ENCODE measurements at regions of chr11 and their contacts with region 1.

Region 1: DNA sequence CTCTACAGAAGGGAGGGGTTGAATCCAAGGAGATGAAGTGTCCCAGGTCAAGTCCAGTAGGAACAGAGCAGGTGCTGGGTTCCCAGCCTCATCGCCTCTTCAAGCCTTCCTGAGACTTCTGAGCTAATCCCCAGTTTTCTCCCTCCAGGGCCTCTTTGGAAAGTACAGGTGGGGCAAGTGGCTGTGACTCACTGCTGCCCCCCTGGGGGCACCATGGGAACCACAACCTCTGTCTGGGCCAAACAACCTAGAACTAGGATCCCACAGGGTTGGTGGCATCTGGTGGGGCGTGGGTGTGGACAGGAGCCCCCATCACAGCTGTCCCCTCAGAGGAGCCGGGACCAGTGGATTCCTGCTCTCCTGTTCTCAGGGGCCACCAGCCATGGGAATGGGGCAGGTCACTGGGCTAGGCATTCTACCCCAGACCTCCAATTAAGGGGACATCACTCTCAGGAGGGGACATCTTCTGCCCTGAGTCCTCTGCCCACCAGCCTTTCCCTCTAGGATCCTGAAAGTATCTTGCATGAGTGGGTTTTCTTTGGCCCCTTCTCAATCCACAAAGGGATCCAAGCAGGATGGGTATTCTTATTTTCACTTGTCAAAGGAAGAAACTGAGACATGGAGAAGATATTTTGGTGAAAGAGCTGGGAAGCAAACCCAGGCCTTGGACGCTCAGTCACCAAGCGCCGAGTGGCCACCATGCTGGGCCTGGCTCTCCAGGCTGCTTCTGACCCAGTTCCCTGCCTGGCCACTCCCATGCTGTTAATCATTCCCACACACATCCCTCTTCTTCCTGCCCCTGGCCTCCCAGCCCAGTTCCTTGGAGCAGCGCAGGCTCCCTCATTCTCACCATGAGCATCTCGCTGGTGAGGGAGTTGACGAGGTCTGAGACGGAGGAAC is 23.8 kb downstream of the LRRC10B start:
- DNase-seq: no peak
- ATAC-seq: no peak
- H3K4me3 ChIP-seq: no peak overlapping the region
- H3K27ac ChIP-seq: no peak overlapping the region
- H3K4me1 ChIP-seq: peaks cover 0 to 48% (median 13%) of the 10 kb centered on the region in 9 donors
- H3K27me3 ChIP-seq: no peaks in the 10 kb centered on the region
- CTCF ChIP-seq: peak; percentile 53 to 88 (median 79)

Region 2: DNA sequence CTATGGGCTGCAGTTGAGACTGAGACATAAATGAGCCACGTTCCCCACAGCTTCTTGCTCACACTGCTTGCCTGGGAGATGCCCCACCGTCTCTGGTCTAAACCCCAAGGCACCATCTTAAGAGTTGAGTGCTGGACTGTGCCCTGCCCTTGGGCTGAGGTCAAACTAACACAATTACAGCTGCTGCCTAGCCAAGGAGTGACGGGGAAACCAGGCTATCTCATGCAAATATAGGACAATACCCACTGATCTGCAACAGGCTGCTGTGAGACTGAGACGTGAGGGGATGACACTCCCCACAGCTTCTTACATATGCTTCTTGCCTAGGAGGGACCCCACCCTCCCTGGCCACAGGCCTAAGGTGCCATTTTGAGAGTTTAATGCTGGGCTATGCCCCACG is 840.7 kb before region 1 on chr11:
- intact Hi-C with region 1: loop called in 1 of 10 experiments (anchors 5 kb)
- DNase-seq: no peak
- ATAC-seq: no peak
- H3K4me3 ChIP-seq: no peak overlapping the region
- H3K27ac ChIP-seq: no peak overlapping the region
- H3K4me1 ChIP-seq: no peaks in the 10 kb centered on the region
- H3K27me3 ChIP-seq: peaks cover 0 to 6% (median 0%) of the 10 kb centered on the region in 7 donors
- CTCF ChIP-seq: no peak

Region 3: GRCh38 chr11:61488651-61489291 is 43.6 kb before region 1 on chr11:
- intact Hi-C with region 1: no loop called
- DNase-seq: peak; percentile 80
- ATAC-seq: peak; percentile 61 to 86 (median 78)
- H3K4me3 ChIP-seq: peak overlapping the region in 4 of 10 donors; percentile 2 to 22 (median 12)
- H3K27ac ChIP-seq: peak overlapping the region in 9 of 10 donors; percentile 26 to 80 (median 61)
- H3K4me1 ChIP-seq: peaks cover 12 to 33% (median 20%) of the 10 kb centered on the region in 9 donors
- H3K27me3 ChIP-seq: no peaks in the 10 kb centered on the region
- CTCF ChIP-seq: no peak

Region 4: GRCh38 chr11:61574611-61575010 is 42.2 kb after region 1 on chr11:
- intact Hi-C with region 1: loop called in 5 of 10 experiments (anchors 5 kb)
- DNase-seq: no peak
- ATAC-seq: no peak
- H3K4me3 ChIP-seq: no peak overlapping the region
- H3K27ac ChIP-seq: no peak overlapping the region
- H3K4me1 ChIP-seq: peaks cover 0 to 68% (median 25%) of the 10 kb centered on the region in 9 donors
- H3K27me3 ChIP-seq: peaks cover 0 to 13% (median 0%) of the 10 kb centered on the region in 7 donors
- CTCF ChIP-seq: no peak

Region 5: DNA sequence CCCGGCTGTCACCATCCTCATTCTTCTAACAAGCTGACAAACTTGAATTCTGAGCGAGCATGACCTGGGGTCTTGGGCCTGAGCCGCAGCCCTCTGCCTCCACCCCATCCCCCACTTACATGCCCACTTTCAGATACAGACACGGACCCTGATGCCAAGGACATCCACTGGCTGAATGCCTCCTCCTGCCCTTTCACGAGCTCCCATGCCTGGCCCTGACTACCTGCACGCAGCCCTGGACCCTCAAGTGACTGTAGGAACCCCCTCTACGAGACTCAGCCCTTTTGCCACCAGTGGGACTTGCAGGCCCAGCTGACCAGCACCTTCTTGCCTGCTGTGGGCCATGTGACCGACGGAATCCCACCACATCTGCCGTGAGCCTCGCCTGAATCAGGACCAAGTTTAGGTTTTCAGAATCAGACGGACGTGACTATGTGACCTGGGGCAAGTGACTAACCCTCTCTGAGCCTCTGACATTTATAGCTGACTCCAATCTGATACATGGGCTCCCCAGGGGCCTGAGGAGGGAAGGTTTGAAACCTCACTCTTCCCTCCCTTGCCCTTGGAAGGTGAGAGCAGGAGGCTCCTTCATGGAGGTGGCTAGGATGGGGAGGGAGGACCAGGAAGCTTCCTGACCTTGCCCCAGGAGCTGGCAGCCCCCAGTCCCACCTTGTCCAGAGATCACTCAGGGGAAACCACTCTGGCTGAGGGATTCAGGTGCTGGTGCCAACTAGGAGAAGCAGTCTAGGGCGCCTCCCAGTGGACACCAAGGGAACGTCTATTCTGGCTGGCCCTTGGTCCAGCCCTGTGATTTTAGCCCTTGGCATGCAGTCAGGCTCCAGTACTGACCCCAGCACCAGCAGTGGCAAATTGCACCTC is 95.4 kb after region 1 on chr11:
- intact Hi-C with region 1: loop called in 2 of 10 experiments (anchors 5 to 10 kb)
- DNase-seq: peak; percentile 74 to 77
- ATAC-seq: peak; percentile 71 to 93 (median 83)
- H3K4me3 ChIP-seq: no peak overlapping the region
- H3K27ac ChIP-seq: peak overlapping the region in 5 of 10 donors; percentile 7 to 90 (median 88)
- H3K4me1 ChIP-seq: peaks cover 0 to 27% (median 16%) of the 10 kb centered on the region in 9 donors
- H3K27me3 ChIP-seq: no peaks in the 10 kb centered on the region
- CTCF ChIP-seq: peak; percentile 61 to 93 (median 86)

Region 6: DNA sequence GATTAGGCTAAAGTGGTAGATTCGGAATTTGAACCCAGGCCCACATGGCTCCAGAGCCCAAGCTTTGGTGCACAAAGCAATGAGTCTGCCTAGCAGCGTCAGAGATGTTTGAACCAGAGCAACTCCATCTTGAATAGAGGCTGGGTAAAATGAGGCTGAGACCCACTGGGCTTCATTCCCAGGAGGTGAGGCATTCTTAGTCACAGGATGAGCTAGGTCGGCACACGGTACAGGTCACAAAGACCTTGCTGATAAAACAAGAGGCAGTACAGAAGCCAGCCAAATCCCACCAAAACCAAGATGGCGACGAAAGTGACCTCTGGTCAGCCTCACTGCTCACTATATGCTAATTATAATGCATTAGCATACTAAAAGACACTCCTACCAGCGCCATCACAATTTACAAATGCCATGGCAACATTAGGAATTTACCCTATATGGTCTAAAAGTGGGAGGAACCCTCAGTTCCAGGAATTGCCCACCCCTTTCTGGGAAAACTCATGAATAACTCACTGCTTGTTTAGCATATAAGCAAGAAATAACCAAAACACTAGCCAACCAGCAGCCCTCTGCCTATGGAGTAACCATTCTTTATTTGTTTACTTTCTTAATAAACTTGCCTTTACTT is 107.5 kb after region 1 on chr11:
- intact Hi-C with region 1: loop called in 1 of 10 experiments (anchors 10 kb)
- DNase-seq: no peak
- ATAC-seq: no peak
- H3K4me3 ChIP-seq: no peak overlapping the region
- H3K27ac ChIP-seq: no peak overlapping the region
- H3K4me1 ChIP-seq: no peaks in the 10 kb centered on the region
- H3K27me3 ChIP-seq: peaks cover 0 to 10% (median 0%) of the 10 kb centered on the region in 7 donors
- CTCF ChIP-seq: no peak

Measured in heart right ventricle (tissue), 16 donors.